Heart left ventricle (tissue), 16 donors: ENCODE measurements at regions of chr1 and their contacts with region 1.

Region 1: GRCh38 chr1:112594259-112594884 is 24.6 kb downstream of the ST7L start:
- DNase-seq: no peak
- ATAC-seq: no peak
- H3K4me3 ChIP-seq: no peak overlapping the region
- H3K27ac ChIP-seq: no peak overlapping the region
- H3K4me1 ChIP-seq: no peaks in the 10 kb centered on the region
- H3K27me3 ChIP-seq: no peaks in the 10 kb centered on the region
- CTCF ChIP-seq: no peak
- POLR2A ChIP-seq: no peak

Region 2: DNA sequence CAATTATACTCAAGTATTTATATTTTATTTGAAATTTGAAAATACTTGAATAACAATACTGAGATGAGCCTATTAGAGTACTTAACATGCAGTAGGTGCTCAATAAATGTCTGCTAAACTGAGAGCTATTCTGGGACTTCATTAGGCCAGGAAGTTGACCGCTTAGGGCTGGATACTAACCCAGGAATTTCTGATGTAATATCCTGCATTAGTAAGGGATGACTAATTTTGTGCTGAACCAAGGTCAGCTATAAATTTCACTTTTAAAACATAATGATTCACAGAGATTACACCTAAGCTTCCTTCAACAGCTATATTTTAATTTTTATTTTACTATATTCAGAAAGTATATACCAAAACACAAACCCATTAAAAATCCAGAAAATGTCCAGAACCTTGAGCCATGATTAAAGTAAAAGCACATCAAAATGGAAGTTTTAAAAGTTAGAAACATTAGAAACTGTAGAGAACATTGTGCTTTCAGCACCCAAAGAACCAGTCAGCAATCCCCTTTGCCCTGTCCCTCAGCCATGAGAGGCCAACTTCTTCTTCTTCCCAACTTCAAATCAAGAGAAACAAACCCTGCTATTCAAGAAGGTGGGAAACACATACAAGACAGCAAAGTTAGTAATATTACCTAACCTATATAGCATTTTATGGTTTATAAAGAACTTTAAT is 50.2 kb before region 1 on chr1:
- intact Hi-C with region 1: loop called in 1 of 10 experiments (anchors 10 kb)
- DNase-seq: no peak
- ATAC-seq: peak in 3 of 4 donors; percentile 83 to 91 (median 90)
- H3K4me3 ChIP-seq: no peak overlapping the region
- H3K27ac ChIP-seq: peak overlapping the region in 9 of 12 donors; percentile 12 to 65 (median 44)
- H3K4me1 ChIP-seq: peaks cover 0 to 21% (median 5%) of the 10 kb centered on the region in 12 donors
- H3K27me3 ChIP-seq: no peaks in the 10 kb centered on the region
- CTCF ChIP-seq: no peak
- POLR2A ChIP-seq: no peak

Region 3: DNA sequence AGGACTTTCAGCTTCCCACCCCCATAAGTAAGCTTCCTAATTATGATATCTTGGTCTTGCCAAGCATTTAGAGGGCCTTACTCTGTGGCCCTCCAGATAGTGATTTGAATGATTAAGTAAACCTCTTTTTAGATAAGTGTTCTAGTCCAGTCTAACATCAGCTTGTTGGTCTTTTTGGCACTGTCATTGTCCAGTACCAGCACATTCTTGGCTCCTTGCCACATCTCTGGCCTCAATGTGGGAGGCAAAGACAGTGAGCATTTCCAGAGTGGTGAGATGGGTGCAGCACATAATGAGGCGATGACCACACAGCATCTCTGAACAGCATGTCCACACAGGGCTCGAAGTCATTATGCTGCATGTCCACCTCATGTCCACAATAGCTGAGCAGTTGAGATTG is 31.3 kb after region 1 on chr1:
- intact Hi-C with region 1: no loop called
- DNase-seq: peak in 3 of 5 donors; percentile 27 to 50 (median 49)
- ATAC-seq: peak; percentile 22 to 76 (median 56)
- H3K4me3 ChIP-seq: no peak overlapping the region
- H3K27ac ChIP-seq: no peak overlapping the region
- H3K4me1 ChIP-seq: peaks cover 4 to 95% (median 60%) of the 10 kb centered on the region in 12 donors
- H3K27me3 ChIP-seq: no peaks in the 10 kb centered on the region
- CTCF ChIP-seq: no peak
- POLR2A ChIP-seq: no peak